Caco-2 (cell line): ENCODE measurements at regions of chr14 and their contacts with region 1.

Region 1: GRCh38 chr14:44912041-44912869 is 49.5 kb downstream of the KLHL28 start:
- DNase-seq: no peak
- H3K4me3 ChIP-seq: no peak overlapping the region
- H3K4me3 Mint-ChIP-seq: no peak overlapping the region
- H3K27ac Mint-ChIP-seq: no peak overlapping the region
- H3K4me1 ChIP-seq: no peaks in the 10 kb centered on the region
- H3K4me1 Mint-ChIP-seq: no peaks in the 10 kb centered on the region
- H3K27me3 ChIP-seq: no peaks in the 10 kb centered on the region
- H3K27me3 Mint-ChIP-seq: no peaks in the 10 kb centered on the region
- CTCF ChIP-seq: no peak

Region 2: GRCh38 chr14:44889595-44890471 is 22.4 kb before region 1 on chr14:
- CTCF ChIA-PET with region 1: interaction called, 10 read pairs
- POLR2A ChIA-PET with region 1: no interaction called
- intact Hi-C with region 1: no loop called
- DNase-seq: no peak
- H3K4me3 ChIP-seq: no peak overlapping the region
- H3K4me3 Mint-ChIP-seq: no peak overlapping the region
- H3K27ac Mint-ChIP-seq: no peak overlapping the region
- H3K4me1 ChIP-seq: no peaks in the 10 kb centered on the region
- H3K4me1 Mint-ChIP-seq: no peaks in the 10 kb centered on the region
- H3K27me3 ChIP-seq: no peaks in the 10 kb centered on the region
- H3K27me3 Mint-ChIP-seq: no peaks in the 10 kb centered on the region
- CTCF ChIP-seq: no peak

Region 3: GRCh38 chr14:44961604-44962333 is 49.5 kb after region 1 on chr14 and contains the starts of genes KLHL28 and TOGARAM1:
- CTCF ChIA-PET with region 1: interaction called, 5 read pairs
- POLR2A ChIA-PET with region 1: no interaction called
- intact Hi-C with region 1: loop called (anchors 5 kb)
- DNase-seq: peak; percentile 90 to 95
- H3K4me3 ChIP-seq: peak within 1 kb of the TSS; percentile 63
- H3K4me3 Mint-ChIP-seq: no peak within 1 kb of the TSS
- H3K27ac Mint-ChIP-seq: no peak within 1 kb of the TSS
- H3K4me1 ChIP-seq: no peaks in the 10 kb centered on the region
- H3K4me1 Mint-ChIP-seq: peaks cover 8% of the 10 kb centered on the region
- H3K27me3 ChIP-seq: no peaks in the 10 kb centered on the region
- H3K27me3 Mint-ChIP-seq: no peaks in the 10 kb centered on the region
- CTCF ChIP-seq: no peak
- total RNA-seq, gene KLHL28: 3.6 and 4.7 TPM in 2 replicates
- total RNA-seq, gene TOGARAM1: 5.9 and 7.1 TPM in 2 replicates

Region 4: DNA sequence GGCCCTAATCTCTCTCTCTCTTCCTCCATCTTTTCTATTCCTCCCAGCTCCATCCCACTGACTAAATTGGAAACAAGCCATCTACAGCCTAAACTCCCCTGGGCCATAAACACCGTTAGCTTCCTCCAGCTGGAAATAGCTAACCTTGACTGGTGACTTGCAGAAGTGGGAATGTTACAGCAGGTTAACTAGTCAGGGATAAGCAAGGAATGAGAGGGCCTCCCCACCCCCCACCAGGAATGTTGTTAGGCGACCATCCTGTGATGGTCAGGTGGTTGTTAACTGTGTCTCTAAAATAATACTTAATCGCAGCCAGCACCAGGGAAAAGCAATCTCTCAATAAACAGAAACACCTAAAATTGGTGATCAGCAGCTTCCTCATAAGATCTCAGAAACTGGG is 300.0 kb after region 1 on chr14:
- CTCF ChIA-PET with region 1: no interaction called
- POLR2A ChIA-PET with region 1: no interaction called
- intact Hi-C with region 1: loop called (anchors 5 kb)
- DNase-seq: peak; percentile 73 to 79
- H3K4me3 ChIP-seq: no peak overlapping the region
- H3K4me3 Mint-ChIP-seq: peak overlapping the region; percentile 48
- H3K27ac Mint-ChIP-seq: peak overlapping the region; percentile 54
- H3K4me1 ChIP-seq: peaks cover 62% of the 10 kb centered on the region
- H3K4me1 Mint-ChIP-seq: peaks cover 30% of the 10 kb centered on the region
- H3K27me3 ChIP-seq: no peaks in the 10 kb centered on the region
- H3K27me3 Mint-ChIP-seq: no peaks in the 10 kb centered on the region
- CTCF ChIP-seq: no peak

Region 5: DNA sequence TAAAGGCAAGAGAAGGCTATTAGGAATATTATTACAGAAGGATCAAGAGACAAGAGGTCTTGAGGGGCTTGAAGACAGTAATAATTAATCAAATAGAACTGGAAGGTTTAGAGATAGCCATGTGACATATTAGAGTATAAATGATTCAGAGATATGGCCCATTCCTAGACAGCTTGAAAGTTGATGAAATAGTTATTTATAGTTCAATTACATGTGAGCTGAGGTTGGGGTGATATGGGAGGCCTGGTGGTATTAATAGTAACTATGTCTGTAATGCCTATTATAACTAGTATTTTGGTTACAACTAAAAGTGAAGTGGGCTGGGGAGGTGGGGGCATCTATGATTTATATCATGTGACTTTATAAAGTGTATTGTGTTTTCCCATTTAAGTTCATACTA is 354.8 kb after region 1 on chr14:
- CTCF ChIA-PET with region 1: interaction called, 12 read pairs
- POLR2A ChIA-PET with region 1: no interaction called
- intact Hi-C with region 1: loop called (anchors 1 kb)
- DNase-seq: no peak
- H3K4me3 ChIP-seq: no peak overlapping the region
- H3K4me3 Mint-ChIP-seq: no peak overlapping the region
- H3K27ac Mint-ChIP-seq: no peak overlapping the region
- H3K4me1 ChIP-seq: no peaks in the 10 kb centered on the region
- H3K4me1 Mint-ChIP-seq: no peaks in the 10 kb centered on the region
- H3K27me3 ChIP-seq: no peaks in the 10 kb centered on the region
- H3K27me3 Mint-ChIP-seq: no peaks in the 10 kb centered on the region
- CTCF ChIP-seq: no peak